ENCODE measurements at regions of chr4 and their contacts with region 1.

Region 1: GRCh38 chr4:159071992-159072351 is 30.9 kb upstream of the RAPGEF2 start:
- DNase-seq: no peak
- ATAC-seq: no peak
- H3K4me3 ChIP-seq: no peak overlapping the region
- H3K4me3 Mint-ChIP-seq: no peak overlapping the region
- H3K27ac ChIP-seq: no peak overlapping the region
- H3K27ac Mint-ChIP-seq: no peak overlapping the region
- H3K4me1 ChIP-seq: peaks cover under 1 to 1% of the 10 kb centered on the region in 2 donors
- H3K4me1 Mint-ChIP-seq: no peaks in the 10 kb centered on the region
- H3K27me3 ChIP-seq: peaks cover 0 to 2% (median 0%) of the 10 kb centered on the region in 4 experiments
- H3K27me3 Mint-ChIP-seq: no peaks in the 10 kb centered on the region
- CTCF ChIP-seq: no peak

Region 2: GRCh38 chr4:159121371-159121770 is 49.4 kb after region 1 on chr4:
- CTCF ChIA-PET with region 1: no interaction called
- POLR2A ChIA-PET with region 1: no interaction called
- intact Hi-C with region 1: loop called (anchors 2 kb)
- DNase-seq: no peak
- ATAC-seq: no peak
- H3K4me3 ChIP-seq: no peak overlapping the region
- H3K4me3 Mint-ChIP-seq: no peak overlapping the region
- H3K27ac ChIP-seq: no peak overlapping the region
- H3K27ac Mint-ChIP-seq: no peak overlapping the region
- H3K4me1 ChIP-seq: peaks cover 5 to 8% of the 10 kb centered on the region in 2 donors
- H3K4me1 Mint-ChIP-seq: peaks cover 20% of the 10 kb centered on the region
- H3K27me3 ChIP-seq: no peaks in the 10 kb centered on the region
- H3K27me3 Mint-ChIP-seq: no peaks in the 10 kb centered on the region
- CTCF ChIP-seq: no peak

Region 3: GRCh38 chr4:159206427-159206871 is 134.5 kb after region 1 on chr4:
- CTCF ChIA-PET with region 1: no interaction called
- POLR2A ChIA-PET with region 1: no interaction called
- intact Hi-C with region 1: no loop called
- DNase-seq: peak; percentile 35
- ATAC-seq: peak; percentile 41
- H3K4me3 ChIP-seq: peak overlapping the region in 1 of 5 experiments; percentile 47
- H3K4me3 Mint-ChIP-seq: peak overlapping the region; percentile 14
- H3K27ac ChIP-seq: no peak overlapping the region
- H3K27ac Mint-ChIP-seq: no peak overlapping the region
- H3K4me1 ChIP-seq: peaks cover 13 to 14% of the 10 kb centered on the region in 2 donors
- H3K4me1 Mint-ChIP-seq: peaks cover 16% of the 10 kb centered on the region
- H3K27me3 ChIP-seq: no peaks in the 10 kb centered on the region
- H3K27me3 Mint-ChIP-seq: no peaks in the 10 kb centered on the region
- CTCF ChIP-seq: no peak

Region 4: GRCh38 chr4:159227378-159227777 is 155.4 kb after region 1 on chr4:
- CTCF ChIA-PET with region 1: no interaction called
- POLR2A ChIA-PET with region 1: no interaction called
- intact Hi-C with region 1: no loop called
- DNase-seq: no peak
- ATAC-seq: no peak
- H3K4me3 ChIP-seq: no peak overlapping the region
- H3K4me3 Mint-ChIP-seq: no peak overlapping the region
- H3K27ac ChIP-seq: no peak overlapping the region
- H3K27ac Mint-ChIP-seq: no peak overlapping the region
- H3K4me1 ChIP-seq: no peaks in the 10 kb centered on the region
- H3K4me1 Mint-ChIP-seq: peaks cover 20% of the 10 kb centered on the region
- H3K27me3 ChIP-seq: no peaks in the 10 kb centered on the region
- H3K27me3 Mint-ChIP-seq: no peaks in the 10 kb centered on the region
- CTCF ChIP-seq: no peak

Region 5: DNA sequence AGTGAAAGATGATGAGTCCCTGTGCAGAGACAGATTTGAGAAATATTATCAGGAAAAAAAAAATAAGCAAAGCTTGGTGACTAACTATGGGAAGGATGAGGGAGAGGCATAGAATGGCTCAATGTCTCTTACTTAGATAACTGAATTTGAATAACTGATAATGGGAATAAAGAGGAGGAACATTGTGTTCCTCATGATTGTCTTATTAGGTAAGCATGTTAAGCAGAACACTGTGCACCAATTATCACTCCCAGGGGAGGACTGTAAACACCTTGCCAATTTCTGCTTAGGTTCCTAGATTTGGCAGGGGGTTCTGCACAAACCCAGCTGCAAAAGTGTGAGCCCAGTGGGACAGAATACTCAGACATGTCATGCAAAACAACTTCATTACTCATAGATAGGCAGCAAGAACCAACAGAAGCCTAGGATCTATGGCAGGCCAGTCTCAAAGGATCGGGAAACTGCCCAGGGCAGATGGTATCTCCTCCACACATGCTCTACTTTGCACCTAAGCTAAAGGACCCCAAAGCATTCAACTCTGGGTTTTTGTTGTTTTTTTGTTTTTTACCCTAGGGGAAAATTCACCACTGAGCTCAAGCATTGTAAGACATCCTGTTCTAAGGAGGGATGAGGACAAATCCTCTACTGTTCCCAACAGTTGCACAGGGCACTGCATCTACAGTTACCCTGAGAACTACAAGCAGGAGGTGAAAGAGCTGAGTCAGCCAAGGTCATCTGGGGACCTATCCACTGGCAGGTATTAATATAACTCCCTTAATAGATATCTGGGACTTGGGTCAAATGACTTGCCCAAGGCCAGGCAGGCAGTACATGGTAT is 937.9 kb after region 1 on chr4:
- CTCF ChIA-PET with region 1: no interaction called
- POLR2A ChIA-PET with region 1: no interaction called
- intact Hi-C with region 1: no loop called
- DNase-seq: no peak
- ATAC-seq: no peak
- H3K4me3 ChIP-seq: no peak overlapping the region
- H3K4me3 Mint-ChIP-seq: no peak overlapping the region
- H3K27ac ChIP-seq: no peak overlapping the region
- H3K27ac Mint-ChIP-seq: no peak overlapping the region
- H3K4me1 ChIP-seq: no peaks in the 10 kb centered on the region
- H3K4me1 Mint-ChIP-seq: no peaks in the 10 kb centered on the region
- H3K27me3 ChIP-seq: no peaks in the 10 kb centered on the region
- H3K27me3 Mint-ChIP-seq: no peaks in the 10 kb centered on the region
- CTCF ChIP-seq: no peak

Measured in B cell (primary cell).